Activated B cell treated with CpG ODN at 0.5 μM for 24 hours (primary cell): ENCODE measurements at regions of chr10 and their contacts with region 1.

Region 1: GRCh38 chr10:48684792-48685623 is at the start of gene WDFY4:
- DNase-seq: peak; percentile 68
- ATAC-seq: peak; percentile 78
- H3K4me3 Mint-ChIP-seq: peak within 1 kb of the TSS; percentile 94
- H3K27ac Mint-ChIP-seq: peak within 1 kb of the TSS; percentile 98
- H3K4me1 Mint-ChIP-seq: peaks cover 79% of the 10 kb centered on the region
- H3K27me3 Mint-ChIP-seq: no peaks in the 10 kb centered on the region
- CTCF ChIP-seq: no peak
- total RNA-seq, gene WDFY4: 480 and 488 TPM in 2 replicates

Region 2: GRCh38 chr10:48661441-48661840 is 23.6 kb before region 1 on chr10:
- CTCF ChIA-PET with region 1: interaction called, 15 read pairs
- POLR2A ChIA-PET with region 1: interaction called, 536 read pairs
- intact Hi-C with region 1: loop called (anchors 1 kb)
- DNase-seq: no peak
- ATAC-seq: no peak
- H3K4me3 Mint-ChIP-seq: no peak overlapping the region
- H3K27ac Mint-ChIP-seq: peak overlapping the region; percentile 73
- H3K4me1 Mint-ChIP-seq: peaks cover 68% of the 10 kb centered on the region
- H3K27me3 Mint-ChIP-seq: no peaks in the 10 kb centered on the region
- CTCF ChIP-seq: no peak

Region 3: DNA sequence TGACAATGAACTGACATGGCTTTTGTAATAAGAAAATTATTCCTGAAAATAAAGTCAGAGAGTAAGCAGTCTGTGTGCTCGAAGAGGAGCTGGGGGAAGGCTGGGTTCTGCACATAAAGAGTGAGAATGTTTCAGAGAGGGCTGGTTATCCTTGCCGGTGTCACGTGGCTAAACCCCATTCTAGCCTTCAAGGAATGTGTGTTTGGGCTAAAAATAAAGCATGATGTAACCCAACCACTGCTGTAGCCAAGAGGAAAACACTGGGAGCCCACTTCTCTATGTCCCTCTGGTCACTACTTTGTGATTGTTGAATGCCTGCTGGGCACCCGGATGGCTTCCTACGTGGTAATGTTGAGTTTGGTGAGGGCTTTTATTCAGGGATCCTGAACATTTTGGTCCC is 23.1 kb after region 1 on chr10:
- CTCF ChIA-PET with region 1: no interaction called
- POLR2A ChIA-PET with region 1: interaction called, 17 read pairs
- intact Hi-C with region 1: no loop called
- DNase-seq: no peak
- ATAC-seq: no peak
- H3K4me3 Mint-ChIP-seq: no peak overlapping the region
- H3K27ac Mint-ChIP-seq: peak overlapping the region; percentile 30
- H3K4me1 Mint-ChIP-seq: peaks cover 82% of the 10 kb centered on the region
- H3K27me3 Mint-ChIP-seq: no peaks in the 10 kb centered on the region
- CTCF ChIP-seq: no peak